PC-3 (cell line): ENCODE measurements at regions of chr20 and their contacts with region 1.

Region 1: DNA sequence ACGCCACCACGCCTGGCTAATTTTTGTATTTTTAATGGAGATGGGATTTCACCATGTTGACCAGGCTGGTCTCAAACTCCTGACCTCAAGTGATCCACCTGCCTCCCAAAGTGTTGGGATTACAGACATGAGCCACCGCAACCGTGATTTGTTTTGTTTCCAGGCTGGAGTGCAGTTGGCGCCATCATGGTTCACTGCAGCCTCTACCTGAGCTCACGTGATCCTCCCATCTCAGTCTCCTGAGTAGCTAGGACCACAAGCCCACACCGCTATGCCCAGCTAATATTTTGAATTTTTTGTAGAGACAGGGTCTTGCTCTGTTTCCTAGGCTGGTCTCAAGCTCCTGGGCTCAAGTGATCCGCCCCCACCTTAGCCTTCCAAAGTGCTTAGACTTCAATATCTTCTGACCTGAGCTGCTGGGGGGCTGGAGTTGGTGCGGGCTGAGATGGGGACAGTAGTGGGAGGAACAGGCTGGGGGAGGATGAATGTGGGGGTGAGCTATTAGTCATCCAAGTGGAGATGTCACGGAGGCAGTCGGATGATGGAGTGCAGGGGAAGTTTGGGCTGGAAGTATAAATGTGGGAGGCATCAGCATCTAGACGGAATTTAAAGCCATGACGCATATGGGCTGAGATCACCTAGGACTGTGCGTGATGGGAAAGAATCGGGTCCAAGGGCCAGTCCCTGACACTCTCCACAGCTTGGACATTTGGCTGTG is 23.1 kb upstream of the ZMYND8 start:
- DNase-seq: no peak
- ATAC-seq: no peak
- H3K4me3 ChIP-seq: no peak overlapping the region
- H3K27ac ChIP-seq: no peak overlapping the region
- H3K4me1 ChIP-seq: peaks cover 12% of the 10 kb centered on the region
- H3K27me3 ChIP-seq: no peaks in the 10 kb centered on the region
- CTCF ChIP-seq: no peak

Region 2: DNA sequence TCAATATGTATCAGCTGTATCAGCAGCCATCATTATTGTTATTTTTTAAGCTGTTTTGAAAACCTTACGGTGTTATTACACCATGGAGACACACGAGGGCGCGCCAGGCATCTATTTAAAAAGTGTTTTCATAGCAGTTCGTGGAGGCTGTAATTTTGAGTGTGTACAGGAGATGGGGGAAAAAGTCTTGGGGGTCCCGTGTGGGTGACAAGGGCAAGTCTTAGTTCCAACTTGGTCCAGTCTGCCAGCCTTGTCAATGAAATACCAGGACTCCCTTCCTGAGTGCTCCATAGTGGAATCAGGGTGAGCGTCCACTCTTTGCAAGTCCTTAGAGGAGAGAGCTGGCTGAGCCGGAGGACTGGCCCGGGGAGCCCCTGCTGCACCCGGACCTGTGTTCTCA is 626.9 kb before region 1 on chr20:
- CTCF ChIA-PET with region 1: no interaction called
- POLR2A ChIA-PET with region 1: no interaction called
- intact Hi-C with region 1: loop called (anchors 5 kb)
- DNase-seq: peak; percentile 82
- ATAC-seq: peak; percentile 44
- H3K4me3 ChIP-seq: peak overlapping the region; percentile 62; the same call in 1 of the 2 replicates
- H3K27ac ChIP-seq: no peak overlapping the region
- H3K4me1 ChIP-seq: peaks cover 6% of the 10 kb centered on the region
- H3K27me3 ChIP-seq: no peaks in the 10 kb centered on the region
- CTCF ChIP-seq: peak; percentile 93

Region 3: GRCh38 chr20:47196091-47197081 is 183.2 kb before region 1 on chr20:
- CTCF ChIA-PET with region 1: interaction called, 12 read pairs
- POLR2A ChIA-PET with region 1: no interaction called
- intact Hi-C with region 1: loop called (anchors 1 kb)
- DNase-seq: peak; percentile 88
- ATAC-seq: peak; percentile 76
- H3K4me3 ChIP-seq: peak overlapping the region; percentile 49
- H3K27ac ChIP-seq: no peak overlapping the region
- H3K4me1 ChIP-seq: peaks cover 29% of the 10 kb centered on the region
- H3K27me3 ChIP-seq: no peaks in the 10 kb centered on the region
- CTCF ChIP-seq: peak; percentile 99

Region 4: GRCh38 chr20:47205577-47206498 is 173.8 kb before region 1 on chr20:
- CTCF ChIA-PET with region 1: interaction called, 22 read pairs
- POLR2A ChIA-PET with region 1: no interaction called
- intact Hi-C with region 1: loop called (anchors 2 kb)
- DNase-seq: peak; percentile 97
- ATAC-seq: peak; percentile 82
- H3K4me3 ChIP-seq: no peak overlapping the region; the same call in 1 of the 2 replicates
- H3K27ac ChIP-seq: peak overlapping the region; percentile 96
- H3K4me1 ChIP-seq: peaks cover 46% of the 10 kb centered on the region
- H3K27me3 ChIP-seq: no peaks in the 10 kb centered on the region
- CTCF ChIP-seq: peak; percentile 92

Region 5: GRCh38 chr20:47304287-47304686 is 75.3 kb before region 1 on chr20:
- CTCF ChIA-PET with region 1: interaction called, 15 read pairs
- POLR2A ChIA-PET with region 1: interaction called, 9 read pairs
- intact Hi-C with region 1: loop called (anchors 1 kb)
- DNase-seq: peak; percentile 59
- ATAC-seq: peak; percentile 98
- H3K4me3 ChIP-seq: no peak overlapping the region
- H3K27ac ChIP-seq: no peak overlapping the region
- H3K4me1 ChIP-seq: peaks cover 8% of the 10 kb centered on the region; the same call in 1 of the 2 replicates
- H3K27me3 ChIP-seq: no peaks in the 10 kb centered on the region
- CTCF ChIP-seq: peak; percentile 52; the same call in 1 of the 2 replicates

Region 6: DNA sequence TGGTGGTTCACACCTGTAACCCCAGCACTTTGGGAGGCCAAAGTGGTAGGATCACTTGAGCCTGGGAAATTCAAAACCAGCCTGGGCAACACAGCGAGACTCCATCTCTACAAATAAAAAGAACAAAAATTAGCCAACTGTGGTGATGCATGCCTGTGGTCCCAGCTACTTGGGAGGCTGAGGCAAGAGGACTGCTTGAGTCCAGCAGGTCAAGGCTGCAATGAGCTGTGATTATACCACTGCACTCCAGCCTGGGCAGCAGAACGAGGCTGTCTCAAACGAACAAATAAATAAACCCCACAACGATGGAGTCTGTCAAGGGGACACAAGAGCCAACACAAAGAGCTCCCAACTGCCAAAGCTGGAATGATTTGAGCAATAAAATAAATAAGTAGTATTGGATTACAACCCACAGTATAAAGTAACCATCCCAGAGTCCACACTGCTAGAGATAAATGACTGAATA is 36.6 kb before region 1 on chr20:
- CTCF ChIA-PET with region 1: no interaction called
- POLR2A ChIA-PET with region 1: no interaction called
- intact Hi-C with region 1: no loop called
- DNase-seq: no peak
- ATAC-seq: peak; percentile 72
- H3K4me3 ChIP-seq: no peak overlapping the region
- H3K27ac ChIP-seq: no peak overlapping the region
- H3K4me1 ChIP-seq: no peaks in the 10 kb centered on the region
- H3K27me3 ChIP-seq: no peaks in the 10 kb centered on the region
- CTCF ChIP-seq: no peak

Region 7: GRCh38 chr20:47453142-47453782 is 73.7 kb after region 1 on chr20:
- CTCF ChIA-PET with region 1: no interaction called
- POLR2A ChIA-PET with region 1: no interaction called
- intact Hi-C with region 1: no loop called
- DNase-seq: peak; percentile 96
- ATAC-seq: peak; percentile 99
- H3K4me3 ChIP-seq: peak overlapping the region; percentile 45
- H3K27ac ChIP-seq: peak overlapping the region; percentile 90
- H3K4me1 ChIP-seq: peaks cover 43% of the 10 kb centered on the region
- H3K27me3 ChIP-seq: no peaks in the 10 kb centered on the region
- CTCF ChIP-seq: no peak